Mammary epithelial cell (primary cell): ENCODE measurements at regions of chr1 and their contacts with region 1.

Region 1: DNA sequence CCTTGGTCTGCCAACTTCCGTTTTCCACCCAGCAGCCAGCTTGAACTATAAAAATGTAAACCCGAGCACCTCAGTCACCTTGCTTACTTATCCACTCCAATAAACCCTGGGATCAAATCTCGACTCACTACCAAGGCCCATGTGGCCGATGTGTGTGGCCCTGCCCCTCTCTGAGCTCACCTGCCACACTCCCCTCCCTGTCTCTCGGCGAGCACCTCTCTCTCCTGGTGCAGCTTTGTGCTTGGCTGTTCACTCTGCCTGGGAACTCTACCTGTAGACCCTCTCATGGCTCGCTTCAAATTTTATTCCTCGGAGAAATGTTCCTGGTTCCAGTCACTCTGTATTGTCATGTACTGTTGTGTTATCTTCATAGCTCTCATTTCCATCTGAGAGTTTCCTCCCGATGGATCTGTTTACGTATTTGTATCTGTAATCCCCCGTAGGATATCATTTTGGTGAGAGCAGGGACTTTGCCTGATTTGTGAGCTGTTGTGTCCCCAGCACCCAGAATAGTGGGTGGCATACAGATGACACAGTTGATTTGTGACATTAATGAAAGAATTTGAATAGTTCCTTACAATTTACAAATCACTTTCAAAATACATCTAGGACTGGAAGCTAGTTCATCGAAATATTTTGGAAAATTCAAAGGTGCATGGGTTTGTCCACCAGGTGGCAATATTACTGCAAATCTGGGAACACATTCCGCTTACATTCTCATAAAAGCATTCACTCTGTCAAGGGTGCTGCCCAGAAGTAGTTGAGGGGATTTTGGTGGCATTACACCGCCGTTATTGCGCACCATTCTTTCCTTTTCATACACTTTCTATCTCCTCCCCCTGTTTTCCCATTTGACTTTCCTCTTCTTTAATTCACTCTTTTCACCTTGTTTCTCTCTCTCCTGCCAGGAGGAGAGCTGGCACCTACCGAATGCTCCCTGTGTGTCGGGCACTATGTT is 95.3 kb downstream of the ABCA4 start:
- DNase-seq: peak; percentile 63
- H3K4me3 ChIP-seq: no peak overlapping the region
- H3K27ac ChIP-seq: no peak overlapping the region
- H3K4me1 ChIP-seq: peaks cover 60% of the 10 kb centered on the region
- H3K27me3 ChIP-seq: no peaks in the 10 kb centered on the region
- CTCF ChIP-seq: peak; percentile 68 to 74

Region 2: GRCh38 chr1:93979718-93980319 is 45.8 kb before region 1 on chr1:
- CTCF ChIA-PET with region 1: no interaction called
- dilution Hi-C with region 1: loop called (anchors 5 kb)
- in situ Hi-C with region 1: no loop called
- intact Hi-C with region 1: no loop called
- DNase-seq: no peak
- H3K4me3 ChIP-seq: no peak overlapping the region
- H3K27ac ChIP-seq: no peak overlapping the region
- H3K4me1 ChIP-seq: peaks cover 52% of the 10 kb centered on the region
- H3K27me3 ChIP-seq: no peaks in the 10 kb centered on the region
- CTCF ChIP-seq: no peak

Region 3: DNA sequence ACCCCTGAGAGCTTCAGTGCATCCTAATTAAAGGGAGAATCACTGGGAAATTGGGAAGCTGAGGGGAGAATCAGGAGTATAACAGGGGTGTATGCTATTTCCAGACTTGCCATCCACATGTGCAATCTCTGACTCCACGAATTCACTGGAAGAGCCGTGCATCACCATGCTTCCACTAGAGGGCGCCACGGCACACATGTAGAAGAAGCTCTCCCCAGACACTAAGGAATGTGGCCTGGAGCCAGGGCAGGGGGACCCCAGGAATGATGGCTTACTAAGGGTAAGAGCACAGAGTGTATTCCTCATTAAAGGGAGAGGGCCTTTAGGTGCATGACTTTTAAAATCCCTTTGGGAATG is 13.8 kb after region 1 on chr1:
- CTCF ChIA-PET with region 1: interaction called, 10 read pairs
- dilution Hi-C with region 1: no loop called
- in situ Hi-C with region 1: no loop called
- intact Hi-C with region 1: no loop called
- DNase-seq: no peak
- H3K4me3 ChIP-seq: no peak overlapping the region
- H3K27ac ChIP-seq: no peak overlapping the region
- H3K4me1 ChIP-seq: peaks cover 23% of the 10 kb centered on the region
- H3K27me3 ChIP-seq: no peaks in the 10 kb centered on the region
- CTCF ChIP-seq: peak; percentile 90 to 97